K562 (cell line): ENCODE measurements at regions of chr5 and their contacts with region 1.

Region 1: DNA sequence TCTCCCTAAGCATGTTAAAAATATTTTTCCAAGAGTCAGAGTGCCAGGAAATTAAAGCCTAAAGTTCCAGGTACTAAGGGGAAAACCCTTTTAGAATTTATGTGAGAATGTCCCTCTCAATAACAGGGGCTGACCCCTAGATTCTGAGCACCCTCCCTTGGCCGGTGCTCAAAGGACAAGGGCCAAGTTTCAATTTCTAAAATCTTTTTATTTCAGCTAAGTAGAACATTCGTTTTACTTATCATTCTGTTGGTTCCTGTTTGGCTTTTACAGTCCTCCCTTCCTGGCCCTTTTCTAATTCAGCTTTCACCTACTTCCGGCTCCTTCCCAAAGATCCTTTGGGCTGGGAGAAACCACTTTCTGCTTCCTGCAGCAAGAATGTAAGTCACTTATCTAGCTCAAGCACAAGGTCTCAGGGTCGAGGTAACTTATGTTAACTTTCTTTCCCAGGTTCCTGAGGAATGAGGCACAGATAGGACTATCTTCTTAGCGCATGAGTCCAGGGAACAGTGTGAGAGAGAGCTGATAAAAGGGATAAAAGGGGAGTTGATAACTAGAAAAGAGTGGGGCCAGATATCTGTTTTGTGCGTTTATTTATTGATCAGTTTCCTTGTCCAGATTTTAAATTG is 34.6 kb upstream of the F2RL2 start:
- DNase-seq: peak; percentile 62 to 95 (median 74)
- ATAC-seq: peak; percentile 89
- H3K4me3 ChIP-seq: no peak overlapping the region
- H3K27ac ChIP-seq: peak overlapping the region; percentile 76
- H3K4me1 ChIP-seq: peaks cover 5 to 31% of the 10 kb centered on the region in 2 experiments; a peak in 4 of 5 replicates
- H3K27me3 ChIP-seq: no peaks in the 10 kb centered on the region
- CTCF ChIP-seq: no peak
- EP300 ChIP-seq: peak; percentile 98
- POLR2A ChIP-seq: no peak
- RAD21 ChIP-seq: no peak; a peak in 2 of 4 replicates

Region 2: GRCh38 chr5:76341651-76342334 is 316.0 kb before region 1 on chr5:
- CTCF ChIA-PET with region 1: no interaction called
- POLR2A ChIA-PET with region 1: no interaction called
- in situ Hi-C with region 1: no loop called
- intact Hi-C with region 1: no loop called
- DNase-seq: no peak
- ATAC-seq: no peak
- H3K4me3 ChIP-seq: no peak overlapping the region
- H3K27ac ChIP-seq: no peak overlapping the region
- H3K4me1 ChIP-seq: peaks cover 2 to 7% of the 10 kb centered on the region in 2 experiments; a peak in 3 of 5 replicates
- H3K27me3 ChIP-seq: no peaks in the 10 kb centered on the region
- CTCF ChIP-seq: no peak
- EP300 ChIP-seq: no peak
- POLR2A ChIP-seq: no peak
- RAD21 ChIP-seq: no peak

Region 3: GRCh38 chr5:76669233-76669632 is 11.4 kb after region 1 on chr5:
- CTCF ChIA-PET with region 1: no interaction called
- POLR2A ChIA-PET with region 1: interaction called, 16 read pairs
- in situ Hi-C with region 1: no loop called
- intact Hi-C with region 1: no loop called
- DNase-seq: no peak
- ATAC-seq: no peak
- H3K4me3 ChIP-seq: no peak overlapping the region
- H3K27ac ChIP-seq: no peak overlapping the region
- H3K4me1 ChIP-seq: peaks cover 3 to 6% of the 10 kb centered on the region in 2 experiments; a peak in 1 of 5 replicates
- H3K27me3 ChIP-seq: no peaks in the 10 kb centered on the region
- CTCF ChIP-seq: no peak
- EP300 ChIP-seq: no peak
- POLR2A ChIP-seq: no peak
- RAD21 ChIP-seq: no peak